Adrenal gland (tissue), 19 donors: ENCODE measurements at regions of chr2 and their contacts with region 1.

Region 1: GRCh38 chr2:67840460-67841068 is 222.2 kb downstream of the C1D start:
- DNase-seq: peak; percentile 71 to 87 (median 76)
- H3K4me3 ChIP-seq: no peak overlapping the region
- H3K27ac ChIP-seq: no peak overlapping the region
- H3K4me1 ChIP-seq: no peaks in the 10 kb centered on the region
- H3K27me3 ChIP-seq: no peaks in the 10 kb centered on the region
- CTCF ChIP-seq: peak; percentile 62 to 93 (median 86)
- POLR2A ChIP-seq: no peak

Region 2: DNA sequence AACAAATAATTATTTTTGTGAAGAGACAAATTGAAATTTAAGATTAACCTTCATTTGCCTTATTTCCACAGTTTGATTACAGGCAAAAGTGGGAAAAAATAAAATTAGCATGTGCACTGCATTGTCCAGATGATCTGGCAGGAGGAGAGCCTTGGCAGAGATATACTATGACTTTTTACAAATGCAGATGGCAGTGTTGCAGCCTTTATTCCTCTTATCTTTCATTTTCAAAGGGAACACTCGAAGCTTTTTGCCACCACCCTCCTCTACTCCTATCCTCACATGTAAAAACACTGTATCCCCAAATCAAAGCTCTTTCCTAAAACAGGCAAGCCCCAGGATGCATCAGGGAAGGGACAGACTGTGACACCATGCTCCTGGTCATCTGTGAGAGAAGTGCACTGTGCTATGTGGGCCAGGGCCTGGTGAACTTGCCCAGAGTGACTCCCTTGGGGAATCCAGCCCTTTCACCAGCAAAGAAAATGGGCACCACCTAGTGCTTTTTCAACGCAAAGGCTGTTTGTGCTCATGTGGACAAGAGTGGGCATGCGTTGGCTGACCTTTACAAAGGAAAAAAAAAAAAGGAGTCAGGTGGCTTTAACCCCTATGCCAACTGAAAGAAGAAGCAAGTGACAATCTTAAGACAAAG is 518.1 kb before region 1 on chr2:
- intact Hi-C with region 1: loop called in 1 of 2 experiments (anchors 10 kb)
- DNase-seq: peak; percentile 67 to 85 (median 81)
- H3K4me3 ChIP-seq: no peak overlapping the region
- H3K27ac ChIP-seq: peak overlapping the region in 3 of 5 donors; percentile 35 to 68 (median 61)
- H3K4me1 ChIP-seq: peaks cover 12 to 31% of the 10 kb centered on the region in 2 donors
- H3K27me3 ChIP-seq: no peaks in the 10 kb centered on the region
- CTCF ChIP-seq: peak; percentile 13 to 65 (median 54)
- POLR2A ChIP-seq: no peak